Caco-2 (cell line): ENCODE measurements at regions of chr6 and their contacts with region 1.

Region 1: GRCh38 chr6:129936329-129937165 is 75.4 kb upstream of the TMEM244 start:
- DNase-seq: peak; percentile 63 to 65
- H3K4me3 ChIP-seq: no peak overlapping the region
- H3K4me3 Mint-ChIP-seq: no peak overlapping the region
- H3K27ac Mint-ChIP-seq: no peak overlapping the region
- H3K4me1 ChIP-seq: no peaks in the 10 kb centered on the region
- H3K4me1 Mint-ChIP-seq: peaks cover 22% of the 10 kb centered on the region
- H3K27me3 ChIP-seq: no peaks in the 10 kb centered on the region
- H3K27me3 Mint-ChIP-seq: no peaks in the 10 kb centered on the region
- CTCF ChIP-seq: peak; percentile 45 to 59

Region 2: GRCh38 chr6:129598244-129599187 is 338.0 kb before region 1 on chr6:
- CTCF ChIA-PET with region 1: interaction called, 3 read pairs
- POLR2A ChIA-PET with region 1: no interaction called
- intact Hi-C with region 1: loop called (anchors 1 kb)
- DNase-seq: peak in 1 of 2 experiments; percentile 60
- H3K4me3 ChIP-seq: no peak overlapping the region
- H3K4me3 Mint-ChIP-seq: no peak overlapping the region
- H3K27ac Mint-ChIP-seq: no peak overlapping the region
- H3K4me1 ChIP-seq: peaks cover 6% of the 10 kb centered on the region
- H3K4me1 Mint-ChIP-seq: no peaks in the 10 kb centered on the region
- H3K27me3 ChIP-seq: no peaks in the 10 kb centered on the region
- H3K27me3 Mint-ChIP-seq: no peaks in the 10 kb centered on the region
- CTCF ChIP-seq: peak; percentile 61

Region 3: GRCh38 chr6:129766959-129767728 is 169.4 kb before region 1 on chr6:
- CTCF ChIA-PET with region 1: no interaction called
- POLR2A ChIA-PET with region 1: no interaction called
- intact Hi-C with region 1: loop called (anchors 5 kb)
- DNase-seq: peak; percentile 14 to 43
- H3K4me3 ChIP-seq: peak overlapping the region; percentile 55
- H3K4me3 Mint-ChIP-seq: peak overlapping the region; percentile 87
- H3K27ac Mint-ChIP-seq: peak overlapping the region; percentile 42
- H3K4me1 ChIP-seq: peaks cover 11% of the 10 kb centered on the region
- H3K4me1 Mint-ChIP-seq: no peaks in the 10 kb centered on the region
- H3K27me3 ChIP-seq: no peaks in the 10 kb centered on the region
- H3K27me3 Mint-ChIP-seq: no peaks in the 10 kb centered on the region
- CTCF ChIP-seq: no peak

Region 4: GRCh38 chr6:129893640-129894039 is 42.9 kb before region 1 on chr6:
- CTCF ChIA-PET with region 1: interaction called, 4 read pairs
- POLR2A ChIA-PET with region 1: no interaction called
- intact Hi-C with region 1: loop called (anchors 1 kb)
- DNase-seq: no peak
- H3K4me3 ChIP-seq: no peak overlapping the region
- H3K4me3 Mint-ChIP-seq: no peak overlapping the region
- H3K27ac Mint-ChIP-seq: no peak overlapping the region
- H3K4me1 ChIP-seq: no peaks in the 10 kb centered on the region
- H3K4me1 Mint-ChIP-seq: no peaks in the 10 kb centered on the region
- H3K27me3 ChIP-seq: no peaks in the 10 kb centered on the region
- H3K27me3 Mint-ChIP-seq: no peaks in the 10 kb centered on the region
- CTCF ChIP-seq: peak; percentile 26 to 40

Region 5: GRCh38 chr6:129920103-129920798 is 16.3 kb before region 1 on chr6:
- CTCF ChIA-PET with region 1: no interaction called
- POLR2A ChIA-PET with region 1: no interaction called
- intact Hi-C with region 1: loop called (anchors 1 kb)
- DNase-seq: peak; percentile 83 to 94
- H3K4me3 ChIP-seq: no peak overlapping the region
- H3K4me3 Mint-ChIP-seq: peak overlapping the region; percentile 57
- H3K27ac Mint-ChIP-seq: peak overlapping the region; percentile 97
- H3K4me1 ChIP-seq: peaks cover 34% of the 10 kb centered on the region
- H3K4me1 Mint-ChIP-seq: peaks cover 24% of the 10 kb centered on the region
- H3K27me3 ChIP-seq: no peaks in the 10 kb centered on the region
- H3K27me3 Mint-ChIP-seq: no peaks in the 10 kb centered on the region
- CTCF ChIP-seq: no peak

Region 6: GRCh38 chr6:129981598-129981997 is 45.1 kb after region 1 on chr6:
- CTCF ChIA-PET with region 1: interaction called, 4 read pairs
- POLR2A ChIA-PET with region 1: no interaction called
- intact Hi-C with region 1: loop called (anchors 1 kb)
- DNase-seq: no peak
- H3K4me3 ChIP-seq: no peak overlapping the region
- H3K4me3 Mint-ChIP-seq: no peak overlapping the region
- H3K27ac Mint-ChIP-seq: no peak overlapping the region
- H3K4me1 ChIP-seq: no peaks in the 10 kb centered on the region
- H3K4me1 Mint-ChIP-seq: no peaks in the 10 kb centered on the region
- H3K27me3 ChIP-seq: no peaks in the 10 kb centered on the region
- H3K27me3 Mint-ChIP-seq: no peaks in the 10 kb centered on the region
- CTCF ChIP-seq: peak; percentile 23 to 31

Region 7: DNA sequence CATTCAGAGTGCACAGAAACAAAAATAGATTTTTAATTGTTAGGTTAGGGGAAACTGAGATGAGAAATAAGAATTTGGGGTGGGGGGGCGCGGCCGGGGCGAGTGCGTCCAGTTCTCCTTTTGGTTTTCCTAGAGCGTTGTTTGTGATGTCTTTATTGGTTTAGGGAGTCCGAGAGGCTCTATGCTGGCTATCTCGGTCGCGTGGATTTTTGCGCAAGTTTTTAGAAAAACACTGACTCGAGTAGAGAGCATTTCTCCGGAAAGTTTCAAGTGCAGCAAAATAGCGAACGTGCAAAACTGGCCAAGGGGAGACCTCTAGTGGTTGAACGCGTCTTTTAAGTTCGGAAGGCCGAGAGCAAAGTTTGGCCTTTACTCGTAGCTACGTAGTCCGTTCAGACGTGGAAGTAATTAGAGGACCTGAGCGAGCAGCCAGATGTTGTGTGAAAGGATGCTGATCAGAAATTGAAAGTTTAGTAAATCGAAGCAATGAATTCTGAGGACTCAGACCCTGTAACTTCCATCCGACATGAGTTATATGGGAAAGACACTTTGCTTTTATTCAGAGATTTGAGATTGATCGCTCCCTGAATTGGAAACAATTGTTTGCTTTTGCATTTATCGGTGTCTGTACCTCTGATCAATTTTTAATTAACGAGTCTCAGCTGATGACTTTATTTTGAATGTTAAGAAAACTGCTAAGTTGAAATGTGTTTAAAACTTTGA is 84.5 kb after region 1 on chr6:
- CTCF ChIA-PET with region 1: interaction called, 4 read pairs
- POLR2A ChIA-PET with region 1: no interaction called
- intact Hi-C with region 1: loop called (anchors 1 kb)
- DNase-seq: peak; percentile 77 to 82
- H3K4me3 ChIP-seq: peak overlapping the region; percentile 80
- H3K4me3 Mint-ChIP-seq: peak overlapping the region; percentile 83
- H3K27ac Mint-ChIP-seq: peak overlapping the region; percentile 50
- H3K4me1 ChIP-seq: peaks cover 8% of the 10 kb centered on the region; the same call in 1 of the 2 replicates
- H3K4me1 Mint-ChIP-seq: no peaks in the 10 kb centered on the region
- H3K27me3 ChIP-seq: no peaks in the 10 kb centered on the region
- H3K27me3 Mint-ChIP-seq: no peaks in the 10 kb centered on the region
- CTCF ChIP-seq: peak; percentile 73 to 76

Region 8: GRCh38 chr6:130178692-130179091 is 242.1 kb after region 1 on chr6:
- CTCF ChIA-PET with region 1: no interaction called
- POLR2A ChIA-PET with region 1: no interaction called
- intact Hi-C with region 1: no loop called
- DNase-seq: peak; percentile 47 to 52
- H3K4me3 ChIP-seq: no peak overlapping the region
- H3K4me3 Mint-ChIP-seq: no peak overlapping the region
- H3K27ac Mint-ChIP-seq: peak overlapping the region; percentile 42
- H3K4me1 ChIP-seq: peaks cover 11% of the 10 kb centered on the region
- H3K4me1 Mint-ChIP-seq: no peaks in the 10 kb centered on the region
- H3K27me3 ChIP-seq: no peaks in the 10 kb centered on the region
- H3K27me3 Mint-ChIP-seq: no peaks in the 10 kb centered on the region
- CTCF ChIP-seq: no peak